Dendritic cell treated with granulocyte-macrophage colony-stimulating factor and Interleukin-4, amounts not matched to agents 40 ng/mL and 50 ng/mL, for 4 days (primary cell): ENCODE measurements at regions of chr19 and their contacts with region 1.

Region 1: DNA sequence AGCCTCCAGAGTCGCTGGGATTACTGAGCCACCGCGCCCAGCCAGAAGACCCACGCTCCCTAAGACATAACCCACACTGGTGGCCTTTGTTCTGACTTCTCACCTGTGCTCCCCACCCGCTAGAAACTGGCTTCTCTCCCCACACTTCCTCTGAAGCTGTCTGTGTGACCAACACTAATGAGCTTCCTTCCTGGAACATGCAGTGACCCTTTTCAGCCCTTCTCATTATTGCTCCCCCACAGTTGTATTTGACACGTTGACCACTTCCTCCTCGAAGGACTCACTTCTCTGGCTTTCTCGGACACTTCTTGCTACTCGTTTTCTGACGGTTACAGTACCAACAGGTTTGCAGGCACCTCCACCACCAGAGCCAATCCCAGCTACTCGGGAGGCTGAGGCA is 10.9 kb downstream of the NCR1 start:
- H3K4me3 Mint-ChIP-seq: no peak overlapping the region
- H3K27ac Mint-ChIP-seq: no peak overlapping the region
- H3K4me1 Mint-ChIP-seq: peaks cover 20% of the 10 kb centered on the region
- H3K27me3 Mint-ChIP-seq: peaks cover 61% of the 10 kb centered on the region

Region 2: DNA sequence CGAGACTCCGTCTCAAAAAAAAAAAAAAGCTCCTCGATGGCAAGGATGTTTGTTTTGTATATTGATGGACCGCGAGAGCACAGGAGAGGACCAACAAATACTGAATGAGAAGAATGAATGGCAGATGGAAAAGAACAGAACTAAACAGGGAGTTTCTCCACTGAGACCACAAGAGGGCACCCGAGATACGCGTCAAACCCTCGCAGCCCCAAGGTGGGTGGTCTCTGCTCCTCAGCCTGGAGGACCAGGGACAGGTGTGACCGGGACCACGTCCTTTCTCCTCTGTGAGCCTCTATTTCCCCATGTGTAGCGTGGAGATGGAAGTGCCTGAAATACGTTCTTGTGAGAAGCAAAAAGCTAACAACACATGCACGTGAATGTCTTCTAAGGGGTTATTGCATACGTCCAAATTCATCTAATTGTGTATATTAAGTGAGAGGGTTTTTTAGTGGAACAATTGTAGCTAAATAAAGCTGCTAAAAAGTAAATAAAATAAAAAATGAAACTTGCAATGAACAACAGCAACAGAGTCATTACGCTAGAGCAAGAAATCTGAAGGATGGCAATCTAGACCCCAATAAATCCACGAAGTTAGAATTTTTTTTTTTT is 435.4 kb before region 1 on chr19:
- intact Hi-C with region 1: loop called (anchors 5 kb)
- H3K4me3 Mint-ChIP-seq: no peak overlapping the region
- H3K27ac Mint-ChIP-seq: no peak overlapping the region
- H3K4me1 Mint-ChIP-seq: peaks cover 65% of the 10 kb centered on the region
- H3K27me3 Mint-ChIP-seq: peaks cover 82% of the 10 kb centered on the region

Region 3: DNA sequence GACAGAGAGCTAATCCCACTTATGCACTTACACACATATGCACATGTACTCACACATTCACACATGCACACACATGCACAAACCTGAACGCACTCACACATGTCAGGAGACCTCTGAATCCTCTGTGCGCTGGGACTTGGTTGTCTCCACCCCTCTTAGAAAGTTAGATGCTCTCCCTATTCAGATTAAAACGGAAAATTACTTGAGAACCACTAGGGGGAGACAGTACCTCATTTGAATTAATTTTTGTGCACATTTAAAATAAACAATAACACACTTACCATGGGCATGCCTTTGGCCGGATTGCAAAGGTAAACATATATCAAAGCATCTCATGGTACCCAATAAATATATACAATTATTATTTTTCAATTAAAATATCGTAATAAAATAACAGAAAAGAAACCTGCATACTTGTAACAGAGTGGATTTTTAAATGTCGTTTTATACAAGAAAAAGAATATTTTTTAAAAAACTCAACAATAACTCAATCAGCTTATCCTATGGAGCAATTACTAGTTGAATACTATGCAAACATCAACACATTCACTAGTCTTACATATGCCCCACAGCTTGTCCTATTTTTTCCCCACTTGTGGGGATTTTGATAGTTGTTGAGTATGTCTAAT is 263.5 kb before region 1 on chr19:
- intact Hi-C with region 1: loop called (anchors 5 kb)
- H3K4me3 Mint-ChIP-seq: no peak overlapping the region
- H3K27ac Mint-ChIP-seq: no peak overlapping the region
- H3K4me1 Mint-ChIP-seq: peaks cover 55% of the 10 kb centered on the region
- H3K27me3 Mint-ChIP-seq: peaks cover 15% of the 10 kb centered on the region

Region 4: DNA sequence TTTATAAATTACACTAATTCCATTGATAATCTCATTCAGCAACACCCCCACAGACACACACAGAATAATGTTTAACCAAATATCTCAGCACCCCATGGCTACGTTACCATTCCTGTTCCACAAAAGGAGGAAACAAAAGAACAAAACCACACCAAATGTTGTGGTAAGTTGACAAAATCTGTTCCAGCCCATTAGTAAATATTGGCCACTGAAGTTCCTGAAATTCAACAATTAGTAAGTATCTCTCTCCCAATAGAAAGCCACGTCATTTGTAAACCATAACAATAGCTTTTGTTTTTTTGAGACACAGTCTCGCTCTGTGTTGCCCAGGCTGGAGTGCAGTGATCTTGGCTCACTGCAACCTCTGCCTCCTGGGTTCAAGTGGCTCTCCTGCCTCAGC is 45.1 kb before region 1 on chr19:
- intact Hi-C with region 1: no loop called
- H3K4me3 Mint-ChIP-seq: no peak overlapping the region
- H3K27ac Mint-ChIP-seq: no peak overlapping the region
- H3K4me1 Mint-ChIP-seq: peaks cover 36% of the 10 kb centered on the region
- H3K27me3 Mint-ChIP-seq: peaks cover 17% of the 10 kb centered on the region

Region 5: DNA sequence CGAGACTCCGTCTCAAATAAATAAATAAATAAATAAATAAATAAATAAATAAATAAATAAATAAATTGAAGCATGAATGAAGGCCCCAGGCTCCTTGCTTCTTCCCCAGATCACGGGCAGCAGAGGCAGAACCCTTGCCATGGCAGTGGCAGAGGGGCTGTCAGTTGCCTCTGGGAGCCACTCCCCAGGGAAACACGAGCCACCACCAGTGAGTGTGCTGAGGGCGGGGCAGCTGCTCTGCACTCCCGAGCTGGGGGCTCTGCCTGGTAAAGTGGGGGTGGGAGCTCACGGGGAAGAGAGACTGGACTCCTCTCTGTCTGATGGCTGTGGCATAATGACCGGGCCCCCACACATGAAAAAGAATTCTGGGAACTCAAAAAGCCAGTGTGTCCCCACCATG is 35.0 kb before region 1 on chr19:
- intact Hi-C with region 1: loop called (anchors 2 kb)
- H3K4me3 Mint-ChIP-seq: no peak overlapping the region
- H3K27ac Mint-ChIP-seq: no peak overlapping the region
- H3K4me1 Mint-ChIP-seq: peaks cover 54% of the 10 kb centered on the region
- H3K27me3 Mint-ChIP-seq: peaks cover 6% of the 10 kb centered on the region

Region 6: GRCh38 chr19:54949412-54949811 is 32.6 kb after region 1 on chr19:
- intact Hi-C with region 1: no loop called
- H3K4me3 Mint-ChIP-seq: no peak overlapping the region
- H3K27ac Mint-ChIP-seq: no peak overlapping the region
- H3K4me1 Mint-ChIP-seq: peaks cover 25% of the 10 kb centered on the region
- H3K27me3 Mint-ChIP-seq: peaks cover 10% of the 10 kb centered on the region